ENCODE measurements at regions of chr13 and their contacts with region 1.

Region 1: GRCh38 chr13:79405829-79406596 is at the start of gene RBM26:
- DNase-seq: peak; percentile 84
- ATAC-seq: peak; percentile 88
- H3K4me3 Mint-ChIP-seq: no peak within 1 kb of the TSS
- H3K27ac Mint-ChIP-seq: peak within 1 kb of the TSS; percentile 97
- H3K4me1 Mint-ChIP-seq: peaks cover 15% of the 10 kb centered on the region
- H3K27me3 Mint-ChIP-seq: no peaks in the 10 kb centered on the region
- CTCF ChIP-seq: no peak
- total RNA-seq, gene RBM26: 73.5 and 92.9 TPM in 2 replicates

Region 2: GRCh38 chr13:78022164-78022877 is 1383.7 kb before region 1 on chr13:
- CTCF ChIA-PET with region 1: no interaction called
- POLR2A ChIA-PET with region 1: no interaction called
- intact Hi-C with region 1: loop called (anchors 5 kb)
- DNase-seq: peak; percentile 20
- ATAC-seq: peak; percentile 99
- H3K4me3 Mint-ChIP-seq: no peak overlapping the region
- H3K27ac Mint-ChIP-seq: peak overlapping the region; percentile 19
- H3K4me1 Mint-ChIP-seq: peaks cover 19% of the 10 kb centered on the region
- H3K27me3 Mint-ChIP-seq: peaks cover 4% of the 10 kb centered on the region
- CTCF ChIP-seq: no peak

Region 3: GRCh38 chr13:79385694-79386093 is 20.3 kb before region 1 on chr13:
- CTCF ChIA-PET with region 1: interaction called, 5 read pairs
- POLR2A ChIA-PET with region 1: interaction called, 29 read pairs
- intact Hi-C with region 1: loop called (anchors 1 kb)
- DNase-seq: no peak
- ATAC-seq: peak; percentile 76
- H3K4me3 Mint-ChIP-seq: no peak overlapping the region
- H3K27ac Mint-ChIP-seq: no peak overlapping the region
- H3K4me1 Mint-ChIP-seq: peaks cover 80% of the 10 kb centered on the region
- H3K27me3 Mint-ChIP-seq: no peaks in the 10 kb centered on the region
- CTCF ChIP-seq: no peak

Region 4: DNA sequence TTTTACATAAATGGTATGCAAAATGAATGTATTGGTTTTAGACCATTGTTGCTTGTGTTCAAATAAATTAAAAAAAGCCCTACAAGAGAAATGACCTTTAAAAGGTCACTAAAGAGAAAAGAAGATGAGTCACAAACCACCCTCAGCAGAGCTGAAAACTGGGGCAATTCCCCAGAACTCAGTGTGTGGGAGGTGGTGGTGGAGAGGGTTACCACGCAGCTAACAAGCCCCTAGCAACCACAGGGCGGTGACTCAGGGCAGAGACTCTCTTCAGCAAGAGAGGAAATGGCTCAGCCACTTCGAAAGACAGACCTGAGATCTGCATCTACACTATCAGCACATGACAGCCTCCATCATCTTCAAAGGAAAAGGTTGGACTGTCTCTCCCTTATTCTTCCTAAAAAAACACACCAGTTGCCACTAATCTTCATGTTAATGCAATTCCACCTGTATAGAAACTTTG is 45.5 kb after region 1 on chr13:
- CTCF ChIA-PET with region 1: no interaction called
- POLR2A ChIA-PET with region 1: interaction called, 4 read pairs
- intact Hi-C with region 1: loop called (anchors 1 kb)
- DNase-seq: peak; percentile 25
- ATAC-seq: peak; percentile 100
- H3K4me3 Mint-ChIP-seq: no peak overlapping the region
- H3K27ac Mint-ChIP-seq: peak overlapping the region; percentile 41
- H3K4me1 Mint-ChIP-seq: peaks cover 17% of the 10 kb centered on the region
- H3K27me3 Mint-ChIP-seq: peaks cover 26% of the 10 kb centered on the region
- CTCF ChIP-seq: no peak

Measured in activated B cell treated with CpG ODN at 0.5 μM for 24 hours (primary cell).